Heart left ventricle (tissue), 16 donors: ENCODE measurements at regions of chr1 and their contacts with region 1.

Region 1: GRCh38 chr1:78279051-78279450 is 211.7 kb upstream of the PTGFR start:
- DNase-seq: no peak
- ATAC-seq: peak in 2 of 4 donors; percentile 84 to 91
- H3K4me3 ChIP-seq: no peak overlapping the region
- H3K27ac ChIP-seq: no peak overlapping the region
- H3K4me1 ChIP-seq: peaks cover 0 to 13% (median 0%) of the 10 kb centered on the region in 12 donors
- H3K27me3 ChIP-seq: no peaks in the 10 kb centered on the region
- CTCF ChIP-seq: no peak
- POLR2A ChIP-seq: no peak

Region 2: DNA sequence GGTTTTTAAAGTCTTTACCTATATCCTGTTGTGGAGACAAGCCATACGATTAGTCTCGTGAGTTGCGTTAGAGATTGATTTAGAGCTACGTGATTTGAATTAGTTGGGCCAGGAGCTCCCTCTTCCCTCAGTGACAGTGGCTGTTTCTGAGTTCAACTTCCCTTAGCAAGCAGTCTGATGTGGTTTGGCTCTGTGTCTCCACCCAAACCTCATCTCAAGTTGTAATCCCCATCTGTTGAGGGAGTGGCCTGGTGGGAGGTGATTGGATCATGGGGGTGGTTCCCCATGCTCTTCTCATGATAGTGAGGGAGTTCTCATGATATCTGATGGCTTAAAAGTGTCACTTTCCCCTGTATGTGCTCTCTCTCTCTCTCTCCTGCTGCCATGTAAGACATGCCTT is 18.8 kb after region 1 on chr1:
- intact Hi-C with region 1: loop called in 1 of 10 experiments (anchors 2 kb)
- DNase-seq: no peak
- ATAC-seq: no peak
- H3K4me3 ChIP-seq: no peak overlapping the region
- H3K27ac ChIP-seq: no peak overlapping the region
- H3K4me1 ChIP-seq: no peaks in the 10 kb centered on the region
- H3K27me3 ChIP-seq: no peaks in the 10 kb centered on the region
- CTCF ChIP-seq: no peak
- POLR2A ChIP-seq: no peak